ENCODE measurements at regions of chr3 and their contacts with region 1.

Region 1: DNA sequence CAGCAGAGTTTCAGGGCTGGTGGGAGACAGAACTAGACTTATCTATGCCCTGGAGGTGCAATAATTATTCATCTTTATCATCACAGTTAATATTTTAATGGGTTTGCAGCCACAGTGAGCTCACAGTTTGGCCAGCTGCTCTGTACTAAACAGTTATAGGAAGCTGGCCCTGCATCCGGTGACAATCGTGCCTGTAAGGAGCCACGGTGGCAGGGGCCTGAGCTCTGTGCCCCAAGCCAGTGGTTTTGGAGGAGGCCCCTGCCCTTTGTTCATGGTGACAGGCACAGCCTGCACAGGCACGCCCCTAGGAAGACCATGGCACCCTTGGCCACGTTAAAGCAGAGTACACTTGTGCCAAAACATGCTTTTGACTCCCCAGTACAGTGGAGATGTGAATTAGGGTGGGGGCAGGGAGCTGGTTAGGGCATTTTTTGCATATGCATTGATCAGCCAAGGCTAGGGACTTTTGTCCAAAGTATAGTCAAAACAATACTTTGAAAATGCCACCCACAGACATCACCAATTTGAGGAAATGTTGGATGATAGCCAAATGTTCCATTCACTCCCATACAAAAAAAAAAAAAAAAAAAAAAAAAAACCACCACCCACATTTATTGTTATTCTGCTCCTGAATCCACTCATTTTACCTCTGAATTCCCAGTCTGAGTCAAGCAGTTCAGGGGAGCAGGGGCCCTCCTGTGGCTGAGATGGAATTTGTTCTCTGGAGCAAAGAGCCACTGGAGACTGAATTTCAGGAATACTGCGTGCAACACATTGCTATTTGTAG is 3.4 kb upstream of the RFTN1 start:
- DNase-seq: peak; percentile 76
- H3K4me3 ChIP-seq: no peak overlapping the region
- H3K27ac ChIP-seq: no peak overlapping the region
- H3K4me1 ChIP-seq: peaks cover 16% of the 10 kb centered on the region
- H3K27me3 ChIP-seq: peaks cover 4% of the 10 kb centered on the region in 2 experiments
- CTCF ChIP-seq: peak; percentile 57 to 66
- POLR2A ChIP-seq: no peak

Region 2: DNA sequence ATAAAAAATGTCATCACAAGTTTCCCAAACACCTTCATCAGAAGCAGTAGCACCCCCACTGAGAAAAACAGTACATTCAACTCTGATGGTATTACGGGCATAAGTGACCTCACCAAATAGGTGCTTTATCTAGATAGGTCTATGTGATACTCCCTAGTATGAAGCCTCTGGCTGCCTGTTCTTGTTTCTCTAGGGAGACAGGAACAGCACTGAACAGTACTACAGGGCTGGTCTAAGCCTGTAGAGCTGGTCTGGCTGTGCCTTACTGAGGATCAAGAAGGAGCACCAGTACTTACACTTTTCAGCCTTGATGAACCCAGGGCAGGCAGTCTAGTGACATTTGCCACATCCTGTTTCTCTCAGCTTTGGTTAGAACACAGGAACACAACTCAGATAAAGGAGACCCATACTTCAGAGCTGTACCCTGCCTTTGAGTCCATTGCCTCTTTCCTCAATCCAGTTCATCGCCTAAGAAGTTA is 216.0 kb before region 1 on chr3:
- CTCF ChIA-PET with region 1: interaction called, 19 read pairs
- POLR2A ChIA-PET with region 1: no interaction called
- dilution Hi-C with region 1: no loop called
- intact Hi-C with region 1: loop called (anchors 5 kb)
- DNase-seq: no peak
- H3K4me3 ChIP-seq: no peak overlapping the region
- H3K27ac ChIP-seq: no peak overlapping the region
- H3K4me1 ChIP-seq: no peaks in the 10 kb centered on the region
- H3K27me3 ChIP-seq: no peaks in the 10 kb centered on the region
- CTCF ChIP-seq: no peak
- POLR2A ChIP-seq: no peak

Region 3: GRCh38 chr3:16370872-16371740 is 145.8 kb before region 1 on chr3:
- CTCF ChIA-PET with region 1: no interaction called
- POLR2A ChIA-PET with region 1: no interaction called
- dilution Hi-C with region 1: no loop called
- intact Hi-C with region 1: loop called (anchors 5 kb)
- DNase-seq: no peak
- H3K4me3 ChIP-seq: no peak overlapping the region
- H3K27ac ChIP-seq: no peak overlapping the region
- H3K4me1 ChIP-seq: no peaks in the 10 kb centered on the region
- H3K27me3 ChIP-seq: no peaks in the 10 kb centered on the region
- CTCF ChIP-seq: no peak
- POLR2A ChIP-seq: no peak

Region 4: GRCh38 chr3:16462679-16463078 is 54.2 kb before region 1 on chr3:
- CTCF ChIA-PET with region 1: no interaction called
- POLR2A ChIA-PET with region 1: no interaction called
- dilution Hi-C with region 1: no loop called
- intact Hi-C with region 1: no loop called
- DNase-seq: no peak
- H3K4me3 ChIP-seq: no peak overlapping the region
- H3K27ac ChIP-seq: no peak overlapping the region
- H3K4me1 ChIP-seq: peaks cover 3% of the 10 kb centered on the region
- H3K27me3 ChIP-seq: no peaks in the 10 kb centered on the region
- CTCF ChIP-seq: no peak
- POLR2A ChIP-seq: no peak

Region 5: DNA sequence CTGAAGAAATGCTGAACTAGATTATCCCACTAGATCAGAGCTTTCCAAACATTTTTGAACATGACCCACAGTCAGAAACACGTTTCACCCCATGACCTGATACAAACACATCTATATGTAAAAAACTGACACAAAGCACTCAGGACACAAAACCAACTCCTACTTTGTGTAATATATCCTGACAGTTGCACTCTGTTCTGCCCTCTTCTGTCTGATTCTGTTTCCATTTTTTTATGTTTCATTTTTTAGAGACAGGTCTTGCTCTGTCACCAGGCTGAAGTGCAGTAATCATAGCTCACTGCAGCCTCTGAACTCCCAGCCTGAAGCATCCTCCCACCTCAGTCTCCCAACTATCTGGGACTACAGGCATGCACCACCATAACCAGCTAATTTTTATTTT is 12.4 kb after region 1 on chr3:
- CTCF ChIA-PET with region 1: interaction called, 10 read pairs
- POLR2A ChIA-PET with region 1: no interaction called
- dilution Hi-C with region 1: no loop called
- intact Hi-C with region 1: no loop called
- DNase-seq: no peak
- H3K4me3 ChIP-seq: no peak overlapping the region
- H3K27ac ChIP-seq: no peak overlapping the region
- H3K4me1 ChIP-seq: no peaks in the 10 kb centered on the region
- H3K27me3 ChIP-seq: peaks cover 12 to 19% of the 10 kb centered on the region in 2 experiments
- CTCF ChIP-seq: no peak
- POLR2A ChIP-seq: no peak